ENCODE measurements at regions of chr3 and their contacts with region 1.

Region 1: DNA sequence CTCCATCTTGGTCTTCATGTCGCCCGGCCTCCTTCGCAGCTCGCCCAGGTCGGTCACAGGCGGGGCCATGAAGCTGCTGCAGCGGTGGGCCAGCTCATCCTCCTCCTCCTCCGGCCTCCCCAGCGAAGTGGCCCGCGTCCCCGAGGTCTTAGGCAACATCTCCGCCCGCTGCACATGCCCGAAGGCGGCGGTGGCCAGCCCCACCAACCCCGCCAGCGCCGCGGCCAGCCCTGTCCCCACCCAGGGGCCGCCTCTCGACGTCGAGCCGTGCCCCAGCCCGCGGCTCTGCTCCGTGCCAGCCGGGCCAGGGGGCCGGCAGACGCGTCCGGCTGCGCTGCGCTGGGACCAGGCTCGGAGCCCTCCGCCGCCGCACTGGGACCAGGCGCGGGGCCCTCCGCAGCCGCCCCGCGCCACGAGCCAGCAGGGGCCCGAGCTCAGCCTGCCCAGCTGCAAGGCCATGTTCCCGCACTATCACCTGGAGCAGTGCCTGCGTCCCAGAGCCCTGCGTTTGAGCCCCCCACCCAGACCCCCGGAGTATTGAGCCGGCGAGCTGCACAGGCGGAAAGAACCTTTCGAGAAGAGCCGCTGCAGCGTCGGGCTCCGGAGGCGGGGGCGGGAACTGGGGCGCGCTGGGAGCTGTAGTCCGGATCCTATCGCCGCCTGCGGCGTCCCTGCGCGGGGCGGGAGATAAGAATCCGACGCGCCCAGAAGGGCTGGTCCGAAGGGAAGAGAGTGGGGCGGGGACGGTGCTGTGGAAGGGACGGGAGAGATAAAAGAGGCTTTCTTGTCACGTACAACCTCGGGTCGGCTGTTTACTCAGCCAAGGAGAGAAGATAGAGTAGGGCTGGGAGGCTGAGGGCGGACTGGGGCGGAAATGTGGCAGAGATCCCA is at the start of gene CPOX:
- DNase-seq: peak; percentile 61 to 91 (median 79)
- ATAC-seq: peak; percentile 96
- H3K4me3 ChIP-seq: peak within 1 kb of the TSS; percentile 63
- H3K4me3 Mint-ChIP-seq: peak within 1 kb of the TSS; percentile 94
- H3K27ac ChIP-seq: peak within 1 kb of the TSS in 1 of 2 donors; percentile 19
- H3K27ac Mint-ChIP-seq: peak within 1 kb of the TSS; percentile 82
- H3K4me1 ChIP-seq: peaks cover 16% of the 10 kb centered on the region
- H3K4me1 Mint-ChIP-seq: peaks cover 35% of the 10 kb centered on the region
- H3K27me3 ChIP-seq: no peaks in the 10 kb centered on the region
- H3K27me3 Mint-ChIP-seq: no peaks in the 10 kb centered on the region
- CTCF ChIP-seq: no peak
- total RNA-seq, gene CPOX: 7.0 to 10.5 TPM

Region 2: DNA sequence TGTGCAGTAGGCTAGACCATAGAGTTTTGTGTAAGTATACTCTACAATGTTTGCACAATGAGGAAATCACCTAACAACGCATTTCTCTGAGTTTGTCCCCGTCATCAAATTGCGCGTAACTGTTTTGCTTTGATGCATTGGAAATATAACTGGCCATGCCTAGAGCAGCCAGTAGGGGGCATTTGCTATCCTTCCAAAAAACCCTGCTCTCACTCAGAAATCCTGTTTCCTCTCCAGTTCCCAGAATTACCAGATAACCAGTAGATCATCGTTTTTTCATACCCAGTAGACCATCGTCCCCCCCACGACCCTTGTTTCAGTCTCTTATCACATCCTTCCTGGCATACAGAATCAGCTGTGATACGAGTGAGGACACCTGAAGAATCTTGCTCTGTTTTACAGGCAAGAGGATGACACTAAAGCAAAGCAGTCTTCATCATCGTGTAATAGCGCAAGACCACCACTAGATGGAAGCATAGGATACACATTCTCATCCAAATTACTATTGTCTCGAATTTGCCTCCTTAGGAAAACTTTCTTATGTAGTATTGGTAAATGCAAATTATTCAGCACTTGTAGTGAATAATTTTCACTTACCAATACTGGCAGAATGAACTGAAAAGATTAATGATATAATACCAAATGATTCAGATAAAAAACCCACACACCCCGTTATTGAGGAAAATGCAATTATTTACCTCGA is 553.8 kb before region 1 on chr3:
- CTCF ChIA-PET with region 1: interaction called, 4 read pairs
- POLR2A ChIA-PET with region 1: no interaction called
- intact Hi-C with region 1: loop called in 1 of 2 experiments (anchors 5 kb)
- DNase-seq: peak; percentile 40 to 91 (median 62)
- ATAC-seq: peak; percentile 93
- H3K4me3 ChIP-seq: peak overlapping the region; percentile 45
- H3K4me3 Mint-ChIP-seq: peak overlapping the region; percentile 72
- H3K27ac ChIP-seq: peak overlapping the region; percentile 59 to 70
- H3K27ac Mint-ChIP-seq: peak overlapping the region; percentile 90
- H3K4me1 ChIP-seq: no peaks in the 10 kb centered on the region
- H3K4me1 Mint-ChIP-seq: no peaks in the 10 kb centered on the region
- H3K27me3 ChIP-seq: no peaks in the 10 kb centered on the region
- H3K27me3 Mint-ChIP-seq: peaks cover 15% of the 10 kb centered on the region
- CTCF ChIP-seq: peak; percentile 98

Region 3: DNA sequence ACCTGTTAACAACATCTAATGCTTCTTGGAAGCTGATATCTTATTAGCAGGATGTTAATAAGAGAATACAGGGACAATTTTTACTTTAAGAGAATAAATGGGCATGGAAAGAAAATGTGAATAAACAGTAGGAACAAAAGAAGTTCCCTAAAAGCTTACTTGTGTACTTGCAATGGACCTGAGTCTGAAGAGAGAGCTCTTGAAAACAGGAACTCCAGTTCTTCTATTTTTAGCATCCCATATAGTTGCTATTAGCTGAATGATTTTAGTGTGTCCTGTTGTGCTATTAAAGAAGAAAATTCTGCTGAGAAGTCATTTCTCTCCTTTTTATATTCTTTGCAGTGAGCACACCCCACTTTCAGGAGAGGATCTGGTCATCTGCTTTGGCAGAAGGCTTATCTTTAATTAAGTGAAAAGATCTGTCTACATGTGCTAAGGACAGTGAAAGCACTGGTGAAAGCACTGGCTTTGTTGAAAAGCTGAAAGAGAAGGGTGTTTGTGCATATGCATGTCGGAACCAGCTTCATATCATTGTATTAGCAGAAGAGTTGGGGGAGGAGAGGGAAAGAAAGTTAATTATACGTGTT is 168.4 kb after region 1 on chr3:
- CTCF ChIA-PET with region 1: no interaction called
- POLR2A ChIA-PET with region 1: no interaction called
- intact Hi-C with region 1: no loop called
- DNase-seq: no peak
- ATAC-seq: no peak
- H3K4me3 ChIP-seq: no peak overlapping the region
- H3K4me3 Mint-ChIP-seq: no peak overlapping the region
- H3K27ac ChIP-seq: no peak overlapping the region
- H3K27ac Mint-ChIP-seq: no peak overlapping the region
- H3K4me1 ChIP-seq: no peaks in the 10 kb centered on the region
- H3K4me1 Mint-ChIP-seq: peaks cover 4% of the 10 kb centered on the region
- H3K27me3 ChIP-seq: no peaks in the 10 kb centered on the region
- H3K27me3 Mint-ChIP-seq: peaks cover 15% of the 10 kb centered on the region
- CTCF ChIP-seq: no peak

Region 4: DNA sequence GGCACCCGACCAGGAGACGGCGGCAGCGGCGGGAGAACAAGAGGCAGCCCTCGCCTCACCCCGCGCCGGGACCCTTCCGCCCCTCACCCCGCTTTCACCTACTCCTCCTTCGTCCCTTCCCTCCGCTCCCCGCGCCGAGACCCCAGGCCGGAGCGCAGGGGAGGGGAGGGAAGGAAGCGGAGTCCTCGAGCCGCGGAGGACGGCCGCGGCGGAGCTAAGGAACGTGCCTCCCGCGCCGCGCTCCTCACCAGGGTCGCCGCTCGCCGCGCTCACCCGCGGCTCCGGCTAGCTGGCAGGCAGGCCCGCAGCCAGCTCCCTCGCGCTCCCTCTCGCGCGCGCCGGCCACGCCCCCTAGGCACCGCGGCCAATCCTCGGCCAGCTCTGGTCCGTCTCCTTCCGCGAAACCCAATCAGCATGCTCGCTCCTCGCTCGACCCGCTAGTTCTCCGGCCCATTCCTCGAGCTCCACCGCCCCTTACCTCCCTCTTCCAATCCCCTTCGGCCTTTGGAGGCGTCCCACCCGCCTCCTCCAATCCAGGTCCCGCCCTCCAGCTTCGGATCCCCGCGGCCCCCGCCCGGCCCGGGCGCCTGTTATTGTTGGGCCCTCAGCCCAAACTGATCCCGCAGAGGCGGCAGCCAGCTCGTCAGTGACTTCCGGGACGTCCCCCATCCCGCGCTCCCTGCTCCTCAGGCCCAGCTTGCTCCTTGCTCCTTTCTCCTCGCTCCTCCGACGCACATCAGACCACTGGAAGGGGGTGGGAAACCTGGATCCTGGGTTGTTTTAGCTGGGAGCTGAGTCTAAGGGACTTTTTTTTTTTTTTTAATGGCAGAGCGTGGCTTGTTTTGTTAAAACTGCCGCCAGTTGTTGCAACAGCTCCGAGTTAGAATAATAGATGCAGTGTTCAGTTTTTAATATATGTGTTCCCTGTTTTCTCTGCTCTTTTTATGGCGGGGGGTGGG is 308.4 kb after region 1 on chr3 and contains the start of gene DCBLD2:
- CTCF ChIA-PET with region 1: no interaction called
- POLR2A ChIA-PET with region 1: interaction called, 11 read pairs
- intact Hi-C with region 1: loop called in 1 of 2 experiments (anchors 5 kb)
- DNase-seq: peak; percentile 79 to 96 (median 88)
- ATAC-seq: peak; percentile 98
- H3K4me3 ChIP-seq: peak within 1 kb of the TSS; percentile 67
- H3K4me3 Mint-ChIP-seq: peak within 1 kb of the TSS; percentile 93
- H3K27ac ChIP-seq: peak within 1 kb of the TSS in 1 of 2 donors; percentile 45
- H3K27ac Mint-ChIP-seq: peak within 1 kb of the TSS; percentile 76
- H3K4me1 ChIP-seq: peaks cover 13% of the 10 kb centered on the region
- H3K4me1 Mint-ChIP-seq: peaks cover 26% of the 10 kb centered on the region
- H3K27me3 ChIP-seq: peaks cover 0 to 2% of the 10 kb centered on the region in 2 experiments
- H3K27me3 Mint-ChIP-seq: peaks cover 12% of the 10 kb centered on the region
- CTCF ChIP-seq: no peak
- total RNA-seq, gene DCBLD2: 2.2 to 2.5 TPM

Region 5: DNA sequence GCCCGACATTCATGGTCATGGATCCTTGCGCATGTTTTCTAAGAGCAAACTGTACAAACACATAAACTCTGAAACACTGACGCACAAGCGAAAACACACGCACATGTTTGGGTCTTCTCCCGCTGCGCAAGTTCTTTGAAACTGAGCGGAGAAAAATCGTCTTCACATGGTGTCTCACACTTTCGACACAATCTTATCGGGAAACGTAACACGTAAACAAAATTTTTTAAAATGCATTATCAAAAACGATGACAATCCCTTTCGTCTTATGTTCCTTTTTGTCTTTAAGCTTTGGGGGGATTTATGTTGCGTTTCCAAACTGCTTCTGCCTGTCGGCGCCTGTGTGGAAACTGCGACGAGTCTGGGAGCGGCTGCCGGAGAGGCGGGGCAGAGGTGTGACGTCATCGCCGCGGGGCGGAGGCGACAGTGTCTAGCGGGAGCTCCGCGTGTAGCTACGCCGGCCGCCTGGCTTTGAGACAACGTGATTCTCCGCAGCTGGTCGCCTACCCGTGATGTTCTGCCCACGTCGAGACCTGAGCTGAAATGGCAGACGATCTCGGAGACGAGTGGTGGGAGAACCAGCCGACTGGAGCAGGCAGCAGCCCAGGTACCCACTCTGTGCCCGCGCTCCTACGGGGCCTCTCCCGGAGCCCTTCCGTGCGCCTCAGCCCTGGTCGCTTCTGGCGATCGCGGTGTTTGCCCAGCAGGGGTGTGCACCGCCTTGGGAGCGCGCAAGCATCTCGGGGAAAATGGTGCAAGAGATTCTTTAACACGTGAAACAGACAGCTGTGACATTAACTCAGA is 1224.3 kb after region 1 on chr3 and contains the start of gene CMSS1:
- CTCF ChIA-PET with region 1: no interaction called
- POLR2A ChIA-PET with region 1: interaction called, 3 read pairs
- intact Hi-C with region 1: loop called in 1 of 2 experiments (anchors 10 kb)
- DNase-seq: peak; percentile 90 to 98 (median 96)
- ATAC-seq: peak; percentile 80
- H3K4me3 ChIP-seq: peak within 1 kb of the TSS; percentile 71
- H3K4me3 Mint-ChIP-seq: peak within 1 kb of the TSS; percentile 97
- H3K27ac ChIP-seq: peak within 1 kb of the TSS; percentile 76 to 86
- H3K27ac Mint-ChIP-seq: peak within 1 kb of the TSS; percentile 100
- H3K4me1 ChIP-seq: peaks cover 15% of the 10 kb centered on the region
- H3K4me1 Mint-ChIP-seq: peaks cover 48% of the 10 kb centered on the region
- H3K27me3 ChIP-seq: no peaks in the 10 kb centered on the region
- H3K27me3 Mint-ChIP-seq: no peaks in the 10 kb centered on the region
- CTCF ChIP-seq: no peak
- total RNA-seq, gene CMSS1: 12.2 TPM

Measured in CD4-positive, alpha-beta T cell (primary cell).